CD8-positive, alpha-beta T cell (primary cell): ENCODE measurements at regions of chr10 and their contacts with region 1.

Region 1: DNA sequence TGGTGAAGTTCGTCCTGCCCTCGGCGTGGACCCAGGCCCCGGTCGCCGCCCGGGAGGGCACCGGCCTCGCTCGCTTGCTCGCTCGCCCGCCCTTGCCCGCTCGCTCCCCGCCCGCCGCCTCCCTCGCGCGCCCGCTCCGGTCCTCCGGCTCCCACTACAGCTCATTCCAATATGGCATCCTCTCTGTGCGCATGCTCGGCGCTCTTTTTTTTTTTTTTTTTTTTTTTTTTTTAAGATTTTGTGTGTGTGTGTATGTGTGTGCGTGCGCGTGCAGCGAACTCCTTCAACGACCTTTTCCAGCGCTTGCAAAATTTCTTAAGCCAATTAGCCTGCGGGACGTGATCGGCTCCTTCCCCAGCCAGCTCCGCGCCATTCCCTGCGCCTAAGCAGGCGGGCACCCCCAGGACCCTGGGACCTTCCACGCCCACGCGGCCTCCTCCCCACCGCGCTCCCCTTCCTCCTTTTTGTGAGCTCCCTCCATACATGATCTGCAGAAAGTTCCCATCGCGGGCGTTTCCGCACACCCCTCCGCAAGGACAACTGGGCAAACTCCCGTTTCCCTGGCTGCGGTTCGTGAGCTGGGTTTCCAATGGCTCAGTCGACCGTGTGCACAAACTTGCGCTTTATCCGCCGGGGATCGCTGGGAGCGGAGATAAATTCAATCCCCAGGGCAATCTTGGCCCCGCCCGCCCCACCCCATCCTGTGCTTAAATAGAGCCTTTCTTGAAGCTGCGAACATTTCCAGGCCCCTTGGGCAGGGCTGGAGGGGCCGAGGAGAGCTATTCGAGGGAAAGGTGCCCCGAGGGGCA is at the start of gene SFMBT2:
- DNase-seq: peak in 7 of 9 experiments; percentile 48 to 87 (median 67)
- ATAC-seq: peak; percentile 51
- H3K4me3 ChIP-seq: peak within 1 kb of the TSS; percentile 93 to 96
- H3K4me3 Mint-ChIP-seq: peak within 1 kb of the TSS; percentile 98
- H3K27ac ChIP-seq: peak within 1 kb of the TSS; percentile 52 to 81
- H3K27ac Mint-ChIP-seq: peak within 1 kb of the TSS; percentile 96
- H3K4me1 ChIP-seq: peaks cover 40% of the 10 kb centered on the region
- H3K4me1 Mint-ChIP-seq: peaks cover 44% of the 10 kb centered on the region
- H3K27me3 ChIP-seq: peaks cover 0 to 10% of the 10 kb centered on the region in 2 experiments
- H3K27me3 Mint-ChIP-seq: no peaks in the 10 kb centered on the region
- CTCF ChIP-seq: no peak
- total RNA-seq, gene SFMBT2: 27.5 to 30.3 TPM

Region 2: DNA sequence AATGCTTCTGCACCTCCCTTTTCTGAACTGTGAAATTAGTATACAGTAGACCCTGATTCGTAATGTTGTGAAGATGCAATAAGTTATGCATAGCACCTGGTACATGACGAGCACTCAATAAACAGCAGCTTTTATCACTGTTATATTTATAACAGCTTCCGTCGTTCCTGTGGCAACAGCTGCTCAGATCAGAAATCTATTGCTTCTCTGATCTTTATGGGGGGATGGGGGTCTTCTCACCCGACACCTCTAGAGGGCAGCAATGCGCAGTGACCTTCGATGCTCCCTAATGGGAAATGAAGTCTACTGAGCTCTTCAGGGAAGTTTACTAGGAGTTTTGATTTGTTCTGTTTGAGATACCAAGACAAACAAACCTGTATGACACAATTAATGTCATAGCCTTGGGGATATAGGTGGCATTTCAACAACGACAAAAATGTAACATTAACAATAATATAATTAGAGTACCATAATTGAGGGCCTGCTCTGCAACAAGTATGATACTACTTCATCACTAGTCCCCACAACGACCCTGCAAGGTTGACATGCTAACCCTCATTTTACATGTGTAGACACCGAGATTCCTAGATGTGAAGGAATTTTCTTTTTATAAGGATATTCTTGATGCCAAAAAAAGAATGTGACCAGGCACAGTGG is 289.8 kb before region 1 on chr10:
- CTCF ChIA-PET with region 1: interaction called, 23 read pairs
- POLR2A ChIA-PET with region 1: no interaction called
- intact Hi-C with region 1: loop called (anchors 1 to 2 kb)
- DNase-seq: peak; percentile 57 to 91 (median 78)
- ATAC-seq: peak; percentile 95
- H3K4me3 ChIP-seq: no peak overlapping the region
- H3K4me3 Mint-ChIP-seq: no peak overlapping the region
- H3K27ac ChIP-seq: no peak overlapping the region
- H3K27ac Mint-ChIP-seq: peak overlapping the region; percentile 69
- H3K4me1 ChIP-seq: peaks cover 4% of the 10 kb centered on the region
- H3K4me1 Mint-ChIP-seq: peaks cover 6% of the 10 kb centered on the region
- H3K27me3 ChIP-seq: no peaks in the 10 kb centered on the region
- H3K27me3 Mint-ChIP-seq: no peaks in the 10 kb centered on the region
- CTCF ChIP-seq: peak; percentile 61

Region 3: GRCh38 chr10:7260412-7260900 is 150.6 kb before region 1 on chr10:
- CTCF ChIA-PET with region 1: interaction called, 16 read pairs
- POLR2A ChIA-PET with region 1: interaction called, 12 read pairs
- intact Hi-C with region 1: loop called (anchors 1 to 2 kb)
- DNase-seq: peak in 2 of 9 experiments; percentile 67 to 74
- ATAC-seq: no peak
- H3K4me3 ChIP-seq: no peak overlapping the region
- H3K4me3 Mint-ChIP-seq: no peak overlapping the region
- H3K27ac ChIP-seq: no peak overlapping the region
- H3K27ac Mint-ChIP-seq: peak overlapping the region; percentile 73
- H3K4me1 ChIP-seq: peaks cover 48% of the 10 kb centered on the region
- H3K4me1 Mint-ChIP-seq: peaks cover 52% of the 10 kb centered on the region
- H3K27me3 ChIP-seq: no peaks in the 10 kb centered on the region
- H3K27me3 Mint-ChIP-seq: no peaks in the 10 kb centered on the region
- CTCF ChIP-seq: no peak

Region 4: GRCh38 chr10:7388602-7389001 is 22.5 kb before region 1 on chr10:
- CTCF ChIA-PET with region 1: interaction called, 12 read pairs
- POLR2A ChIA-PET with region 1: interaction called, 11 read pairs
- intact Hi-C with region 1: loop called in 1 of 2 experiments (anchors 2 kb)
- DNase-seq: peak in 6 of 9 experiments; percentile 28 to 64 (median 46)
- ATAC-seq: peak; percentile 78
- H3K4me3 ChIP-seq: no peak overlapping the region
- H3K4me3 Mint-ChIP-seq: peak overlapping the region; percentile 72
- H3K27ac ChIP-seq: peak overlapping the region; percentile 21 to 55
- H3K27ac Mint-ChIP-seq: peak overlapping the region; percentile 92
- H3K4me1 ChIP-seq: peaks cover 35% of the 10 kb centered on the region
- H3K4me1 Mint-ChIP-seq: peaks cover 65% of the 10 kb centered on the region
- H3K27me3 ChIP-seq: no peaks in the 10 kb centered on the region
- H3K27me3 Mint-ChIP-seq: no peaks in the 10 kb centered on the region
- CTCF ChIP-seq: no peak

Region 5: GRCh38 chr10:7445474-7446185 is 34.6 kb after region 1 on chr10:
- CTCF ChIA-PET with region 1: no interaction called
- POLR2A ChIA-PET with region 1: no interaction called
- intact Hi-C with region 1: no loop called
- DNase-seq: no peak
- ATAC-seq: no peak
- H3K4me3 ChIP-seq: no peak overlapping the region
- H3K4me3 Mint-ChIP-seq: no peak overlapping the region
- H3K27ac ChIP-seq: no peak overlapping the region
- H3K27ac Mint-ChIP-seq: no peak overlapping the region
- H3K4me1 ChIP-seq: no peaks in the 10 kb centered on the region
- H3K4me1 Mint-ChIP-seq: peaks cover 6% of the 10 kb centered on the region
- H3K27me3 ChIP-seq: no peaks in the 10 kb centered on the region
- H3K27me3 Mint-ChIP-seq: no peaks in the 10 kb centered on the region
- CTCF ChIP-seq: no peak

Region 6: GRCh38 chr10:7484456-7485243 is 73.6 kb after region 1 on chr10:
- CTCF ChIA-PET with region 1: interaction called, 7 read pairs
- POLR2A ChIA-PET with region 1: interaction called, 14 read pairs
- intact Hi-C with region 1: loop called (anchors 2 to 5 kb)
- DNase-seq: peak; percentile 39 to 92 (median 66)
- ATAC-seq: peak; percentile 79
- H3K4me3 ChIP-seq: peak overlapping the region; percentile 16 to 40
- H3K4me3 Mint-ChIP-seq: peak overlapping the region; percentile 69
- H3K27ac ChIP-seq: peak overlapping the region; percentile 67 to 83
- H3K27ac Mint-ChIP-seq: peak overlapping the region; percentile 94
- H3K4me1 ChIP-seq: peaks cover 80% of the 10 kb centered on the region
- H3K4me1 Mint-ChIP-seq: peaks cover 89% of the 10 kb centered on the region
- H3K27me3 ChIP-seq: no peaks in the 10 kb centered on the region
- H3K27me3 Mint-ChIP-seq: no peaks in the 10 kb centered on the region
- CTCF ChIP-seq: no peak